ENCODE measurements at regions of chr6 and their contacts with region 1.

Region 1: GRCh38 chr6:36851149-36851614 is 11.9 kb upstream of the CPNE5 start:
- DNase-seq: peak; percentile 14
- H3K4me3 ChIP-seq: no peak overlapping the region
- CTCF ChIP-seq: peak; percentile 67

Region 2: GRCh38 chr6:36788768-36789167 is 62.4 kb before region 1 on chr6:
- CTCF ChIA-PET with region 1: interaction called, 14 read pairs
- POLR2A ChIA-PET with region 1: no interaction called
- DNase-seq: no peak
- H3K4me3 ChIP-seq: no peak overlapping the region
- CTCF ChIP-seq: no peak

Region 3: GRCh38 chr6:36839749-36840431 is 11.3 kb before region 1 on chr6:
- CTCF ChIA-PET with region 1: interaction called, 40 read pairs
- POLR2A ChIA-PET with region 1: no interaction called
- DNase-seq: no peak
- H3K4me3 ChIP-seq: peak overlapping the region; percentile 55
- CTCF ChIP-seq: peak; percentile 23

Region 4: GRCh38 chr6:36874443-36875249 is 23.5 kb after region 1 on chr6 and contains the start of gene PPIL1:
- CTCF ChIA-PET with region 1: interaction called, 132 read pairs
- POLR2A ChIA-PET with region 1: interaction called, 5 read pairs
- DNase-seq: peak; percentile 47
- H3K4me3 ChIP-seq: peak within 1 kb of the TSS; percentile 95
- CTCF ChIP-seq: no peak